Dorsolateral prefrontal cortex (tissue), 120 donors: ENCODE measurements at regions of chr18 and their contacts with region 1.

Region 1: GRCh38 chr18:22563098-22563707 is 145.5 kb upstream of the CTAGE1 start:
- DNase-seq: peak in 1 of 10 donors; percentile 13
- H3K4me3 ChIP-seq: no peak overlapping the region
- H3K27ac ChIP-seq: no peak overlapping the region
- H3K27me3 ChIP-seq: peaks cover 0 to 96% (median 62%) of the 10 kb centered on the region in 45 donors
- CTCF ChIP-seq: peak in 54 of 56 donors; percentile 40 to 83 (median 66)

Region 2: GRCh38 chr18:21897811-21898210 is 665.4 kb before region 1 on chr18:
- intact Hi-C with region 1: loop called in 1 of 2 experiments (anchors 5 kb)
- DNase-seq: peak in 2 of 10 donors; percentile 7 to 12
- H3K4me3 ChIP-seq: no peak overlapping the region
- H3K27ac ChIP-seq: no peak overlapping the region
- H3K27me3 ChIP-seq: peaks cover 0 to 22% (median 0%) of the 10 kb centered on the region in 45 donors
- CTCF ChIP-seq: peak; percentile 28 to 76 (median 66)

Region 3: GRCh38 chr18:21997207-21998143 is 565.7 kb before region 1 on chr18:
- intact Hi-C with region 1: loop called in 1 of 2 experiments (anchors 10 kb)
- DNase-seq: no peak
- H3K4me3 ChIP-seq: no peak overlapping the region
- H3K27ac ChIP-seq: no peak overlapping the region
- H3K27me3 ChIP-seq: no peaks in the 10 kb centered on the region
- CTCF ChIP-seq: peak in 55 of 56 donors; percentile 31 to 75 (median 65)